Right ventricle myocardium inferior (tissue), 1 donor: ENCODE measurements at regions of chr10 and their contacts with region 1.

Region 1: GRCh38 chr10:120942806-120943413 is 91.7 kb downstream of the WDR11 start:
- DNase-seq: peak; percentile 87
- ATAC-seq: peak; percentile 86

Region 2: DNA sequence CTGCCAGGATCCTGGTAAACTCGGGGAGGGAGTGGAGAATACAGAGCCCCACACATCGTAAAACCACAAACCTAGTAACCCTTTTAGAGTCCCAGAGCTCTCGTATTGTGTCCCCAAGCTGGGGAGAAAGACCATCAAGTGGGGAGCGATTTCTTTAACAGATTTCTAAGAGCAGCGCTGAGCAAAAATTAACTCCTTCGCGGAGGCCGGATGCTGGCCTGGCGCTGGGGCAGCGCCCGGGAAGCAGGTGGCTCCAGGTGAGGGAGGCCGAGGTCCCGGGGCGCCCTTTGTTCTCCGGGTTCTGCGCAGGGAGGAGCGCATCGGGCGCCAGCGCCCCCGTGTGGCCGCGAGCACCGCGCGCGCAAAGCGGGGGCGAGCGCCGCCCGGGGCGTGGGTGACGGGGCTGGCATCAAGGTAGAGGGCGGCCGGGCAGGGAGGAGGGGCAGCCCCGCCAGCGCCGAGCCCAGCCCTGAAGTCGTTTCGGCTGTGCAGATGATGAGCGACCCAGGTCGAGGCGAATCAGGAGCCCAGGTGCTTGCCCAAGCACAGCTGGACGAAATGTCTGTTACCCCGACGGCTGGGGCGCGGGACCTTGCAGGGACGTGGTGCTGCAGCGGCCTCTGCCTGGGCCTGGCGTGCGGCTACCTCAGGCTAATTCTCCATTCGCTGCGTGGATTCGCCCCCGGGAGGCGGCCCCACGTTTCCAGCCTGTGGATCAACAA is 665.7 kb after region 1 on chr10:
- intact Hi-C with region 1: loop called (anchors 5 kb)
- DNase-seq: no peak
- ATAC-seq: peak; percentile 91

Region 3: GRCh38 chr10:121886997-121887622 is 944.2 kb after region 1 on chr10:
- intact Hi-C with region 1: loop called (anchors 2 kb)
- DNase-seq: no peak
- ATAC-seq: peak; percentile 67

Region 4: DNA sequence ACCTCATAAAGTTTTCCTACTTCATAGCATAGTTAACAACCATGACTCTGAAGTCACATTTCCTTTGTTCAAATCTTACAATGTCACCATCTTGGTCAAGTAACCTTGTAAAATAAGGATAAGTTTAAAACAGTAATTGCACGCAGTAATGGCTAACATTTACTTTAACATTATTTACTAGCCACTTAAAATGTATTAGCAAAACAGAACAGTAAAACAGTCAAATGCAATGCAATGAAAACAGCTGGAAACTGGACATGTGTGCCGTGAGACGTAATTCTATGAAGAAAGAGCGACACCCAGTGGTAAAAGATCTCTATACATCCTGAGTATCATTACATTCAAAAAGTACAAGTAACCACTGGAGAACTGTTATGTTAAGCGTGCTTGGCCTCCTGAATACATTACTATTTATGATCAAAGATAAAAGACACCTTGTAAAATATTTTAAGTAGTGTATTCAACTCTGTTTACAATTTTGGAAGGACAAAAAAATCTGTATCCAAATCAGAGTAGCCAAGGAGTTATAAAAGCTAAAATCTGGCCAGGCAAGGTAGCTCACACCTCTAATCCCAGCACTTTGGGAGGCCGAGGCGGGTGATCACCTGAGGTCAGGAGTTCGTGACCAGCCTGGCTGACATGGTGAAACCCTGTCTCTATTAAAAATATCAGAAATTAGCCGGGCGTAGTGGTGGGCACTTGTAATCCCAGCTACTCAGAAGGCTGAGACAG is 957.7 kb after region 1 on chr10:
- intact Hi-C with region 1: loop called (anchors 5 kb)
- DNase-seq: no peak
- ATAC-seq: peak; percentile 67